ENCODE measurements at regions of chr7 and their contacts with region 1.

Region 1: GRCh38 chr7:121352323-121352722 is 23.5 kb downstream of the WNT16 start:
- DNase-seq: no peak
- H3K4me3 ChIP-seq: no peak overlapping the region
- H3K27ac ChIP-seq: no peak overlapping the region
- H3K4me1 ChIP-seq: no peaks in the 10 kb centered on the region
- H3K27me3 ChIP-seq: no peaks in the 10 kb centered on the region
- CTCF ChIP-seq: no peak

Region 2: DNA sequence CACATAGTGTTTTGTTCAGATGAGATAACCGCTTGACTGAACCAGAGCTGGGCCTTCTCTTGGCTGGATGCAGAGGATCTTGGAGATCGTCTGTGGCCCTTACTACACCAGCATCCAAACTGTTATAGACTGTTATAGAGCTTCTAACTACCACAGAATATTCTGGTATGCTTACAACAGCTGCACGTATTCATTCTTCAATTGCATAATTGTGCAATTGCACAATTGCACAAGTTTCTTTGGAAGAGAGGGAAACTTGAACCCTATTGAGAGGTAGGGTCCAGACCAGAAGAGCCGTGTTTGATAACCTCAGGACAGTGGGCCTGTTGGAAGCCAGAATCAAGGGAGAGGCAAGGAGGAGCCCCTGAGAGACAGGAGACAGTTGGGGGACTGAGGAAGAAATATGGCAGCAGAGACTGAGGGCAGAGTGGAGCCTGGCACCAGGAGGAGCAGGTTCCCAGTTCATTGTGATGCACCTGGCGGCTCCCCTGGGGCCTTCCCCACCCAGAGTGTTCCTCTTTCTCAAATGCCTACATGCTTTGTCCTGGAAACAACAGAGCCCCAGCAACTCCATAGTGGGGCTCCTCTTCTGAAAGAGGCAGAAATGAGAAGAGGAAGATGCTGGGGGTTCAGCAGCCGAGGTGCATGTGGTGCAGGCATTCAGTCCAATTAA is 584.8 kb after region 1 on chr7:
- CTCF ChIA-PET with region 1: interaction called, 10 read pairs
- POLR2A ChIA-PET with region 1: no interaction called
- intact Hi-C with region 1: no loop called
- DNase-seq: no peak
- H3K4me3 ChIP-seq: no peak overlapping the region
- H3K27ac ChIP-seq: no peak overlapping the region
- H3K4me1 ChIP-seq: no peaks in the 10 kb centered on the region
- H3K27me3 ChIP-seq: peaks cover 4% of the 10 kb centered on the region
- CTCF ChIP-seq: no peak

Measured in A673 (cell line).